ENCODE measurements at regions of chr7 and their contacts with region 1.

Region 1: GRCh38 chr7:47444379-47445057 is 137.4 kb downstream of the TNS3 start:
- DNase-seq: no peak
- ATAC-seq: peak in 2 of 8 donors; percentile 16 to 40
- H3K4me3 ChIP-seq: no peak overlapping the region
- H3K27ac ChIP-seq: no peak overlapping the region
- H3K4me1 ChIP-seq: peaks cover 4 to 48% (median 23%) of the 10 kb centered on the region in 9 donors
- H3K27me3 ChIP-seq: no peaks in the 10 kb centered on the region
- CTCF ChIP-seq: peak; percentile 13 to 66 (median 50)

Region 2: DNA sequence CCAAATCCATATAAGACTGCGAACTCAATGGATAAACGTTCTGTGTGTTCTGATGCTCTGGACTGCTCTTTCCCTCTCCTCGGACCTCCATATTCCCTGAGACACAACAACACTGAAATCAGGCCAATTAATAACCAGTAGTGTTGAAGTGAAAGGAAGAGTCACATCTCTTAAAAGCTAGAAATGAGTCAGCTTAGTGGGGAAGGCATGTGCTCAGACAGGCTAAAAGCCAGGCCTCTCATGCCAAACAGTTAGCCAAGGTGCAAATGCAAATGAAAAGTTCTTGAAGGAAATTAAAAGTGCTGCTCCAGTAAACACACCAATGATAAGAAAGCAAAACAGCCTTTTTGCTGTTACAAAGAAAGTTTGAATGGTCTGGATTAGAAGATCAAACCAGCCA is 108.1 kb after region 1 on chr7:
- intact Hi-C with region 1: loop called in 1 of 10 experiments (anchors 10 kb)
- DNase-seq: no peak
- ATAC-seq: peak; percentile 42 to 78 (median 59)
- H3K4me3 ChIP-seq: no peak overlapping the region
- H3K27ac ChIP-seq: peak overlapping the region in 5 of 10 donors; percentile 6 to 41 (median 22)
- H3K4me1 ChIP-seq: peaks cover 0 to 46% (median 18%) of the 10 kb centered on the region in 9 donors
- H3K27me3 ChIP-seq: no peaks in the 10 kb centered on the region
- CTCF ChIP-seq: no peak